CD8-positive, alpha-beta T cell (primary cell): ENCODE measurements at regions of chr1 and their contacts with region 1.

Region 1: DNA sequence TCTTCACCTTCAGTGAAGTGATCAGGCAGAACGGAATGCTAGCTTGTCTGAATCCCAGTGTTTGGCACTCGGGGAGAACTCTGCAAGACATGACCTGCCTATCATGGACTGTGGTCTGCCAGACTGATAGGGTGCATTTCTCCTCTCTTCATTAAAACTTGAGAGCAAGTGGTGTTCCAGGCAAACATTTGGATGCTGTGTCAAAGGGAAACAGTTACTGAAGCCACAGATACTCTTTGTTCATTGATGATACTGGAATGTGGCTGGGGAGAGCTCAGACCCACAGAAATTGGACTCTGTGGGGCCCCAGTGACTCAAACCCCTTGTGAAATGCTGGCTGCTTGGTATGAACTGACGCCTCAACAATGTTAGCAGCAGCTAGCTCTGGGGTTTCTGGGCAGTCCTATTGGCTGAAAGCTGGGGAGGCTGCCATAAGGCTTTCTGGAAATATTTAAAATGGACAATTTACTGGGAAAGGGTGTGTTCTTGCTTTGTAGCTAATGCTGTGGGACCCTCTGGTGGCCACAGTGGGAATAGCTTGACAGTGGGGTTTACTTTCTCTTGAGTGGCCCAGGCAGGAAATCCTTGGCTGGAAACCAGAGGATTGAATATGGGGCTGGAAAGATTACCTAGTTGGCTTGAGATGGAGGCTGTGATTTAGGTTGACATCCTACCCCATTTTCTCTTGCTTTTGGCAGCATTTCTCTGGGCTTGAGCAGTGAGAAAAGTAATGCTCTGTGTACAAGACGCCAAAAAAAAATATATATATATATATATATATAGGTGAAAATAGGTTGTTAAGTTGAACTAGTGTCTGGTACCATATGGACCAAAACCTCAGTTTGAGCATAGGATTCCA is 8.0 kb upstream of the S100A10 start:
- DNase-seq: peak; percentile 59 to 85 (median 79)
- ATAC-seq: peak; percentile 83
- H3K4me3 ChIP-seq: no peak overlapping the region
- H3K4me3 Mint-ChIP-seq: no peak overlapping the region
- H3K27ac ChIP-seq: no peak overlapping the region
- H3K27ac Mint-ChIP-seq: no peak overlapping the region
- H3K4me1 ChIP-seq: no peaks in the 10 kb centered on the region
- H3K4me1 Mint-ChIP-seq: no peaks in the 10 kb centered on the region
- H3K27me3 ChIP-seq: no peaks in the 10 kb centered on the region
- H3K27me3 Mint-ChIP-seq: peaks cover 8% of the 10 kb centered on the region
- CTCF ChIP-seq: peak; percentile 91

Region 2: DNA sequence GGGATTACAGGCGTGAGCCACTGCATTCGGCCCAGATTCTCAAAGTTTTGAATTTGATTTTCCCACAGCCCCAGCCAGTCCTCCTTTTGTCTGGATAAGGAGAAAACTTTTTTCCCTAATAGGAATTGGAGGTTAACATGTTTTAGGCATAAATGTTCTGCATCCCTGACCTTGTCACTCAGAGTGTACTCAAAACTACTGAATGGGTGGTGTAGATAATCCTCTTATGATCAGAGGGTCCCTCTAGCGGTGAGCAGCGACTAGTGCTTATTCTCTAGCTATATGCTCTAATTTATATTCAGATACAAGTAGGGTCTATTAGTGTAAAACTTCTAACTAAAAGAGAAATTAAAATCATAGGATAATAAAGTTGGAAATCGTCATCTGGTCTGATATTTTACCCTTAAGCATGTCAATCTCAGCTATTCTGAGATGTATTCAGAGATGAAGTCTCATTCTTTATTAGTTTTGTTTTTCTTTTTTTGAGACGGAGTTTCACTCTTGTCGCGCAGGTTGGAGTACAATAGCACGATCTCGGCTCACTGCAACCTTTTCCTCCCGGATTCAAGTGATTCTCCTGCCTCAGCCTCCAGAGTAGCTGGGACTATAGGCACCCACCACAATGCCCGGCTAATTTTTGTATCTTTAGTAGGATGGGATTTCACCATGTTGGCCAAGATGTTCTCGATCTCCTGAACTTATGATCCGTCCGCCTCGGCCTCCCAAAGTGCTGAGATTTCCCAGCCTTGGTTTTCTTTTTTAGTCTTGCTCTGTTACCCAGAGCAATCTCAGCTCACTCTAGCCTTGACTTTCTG is 749.8 kb before region 1 on chr1:
- CTCF ChIA-PET with region 1: no interaction called
- POLR2A ChIA-PET with region 1: no interaction called
- intact Hi-C with region 1: no loop called
- DNase-seq: peak; percentile 34 to 85 (median 68)
- ATAC-seq: peak; percentile 67
- H3K4me3 ChIP-seq: no peak overlapping the region
- H3K4me3 Mint-ChIP-seq: no peak overlapping the region
- H3K27ac ChIP-seq: no peak overlapping the region
- H3K27ac Mint-ChIP-seq: no peak overlapping the region
- H3K4me1 ChIP-seq: peaks cover 10% of the 10 kb centered on the region
- H3K4me1 Mint-ChIP-seq: peaks cover 17% of the 10 kb centered on the region
- H3K27me3 ChIP-seq: no peaks in the 10 kb centered on the region
- H3K27me3 Mint-ChIP-seq: no peaks in the 10 kb centered on the region
- CTCF ChIP-seq: peak; percentile 91

Region 3: DNA sequence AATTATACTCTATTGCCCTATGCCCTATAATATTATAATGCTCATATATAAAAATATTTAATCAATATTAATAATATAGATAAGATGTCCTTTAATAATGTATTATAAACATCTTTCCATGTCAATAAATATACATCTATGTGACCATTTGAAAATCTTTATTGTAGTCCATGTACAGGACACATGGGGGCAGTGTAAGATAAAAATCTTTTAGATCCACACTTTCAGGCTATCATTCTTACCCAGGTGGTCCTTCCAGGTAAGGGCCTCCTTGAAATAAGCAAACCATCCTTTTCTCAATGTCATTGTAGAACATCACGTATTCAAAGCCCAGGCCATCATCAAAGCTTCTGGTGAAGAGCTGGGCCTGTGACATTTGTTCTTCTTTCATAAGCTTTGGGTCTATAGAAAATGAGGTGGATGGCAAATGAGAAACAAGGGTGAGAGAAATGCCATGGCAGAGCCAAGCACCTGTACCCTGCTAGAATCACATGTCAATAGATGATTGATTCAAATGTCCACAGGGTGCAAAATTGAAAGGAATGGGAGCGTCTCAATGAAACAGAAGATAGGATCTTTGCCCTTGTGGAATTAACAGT is 112.5 kb before region 1 on chr1:
- CTCF ChIA-PET with region 1: interaction called, 68 read pairs
- POLR2A ChIA-PET with region 1: interaction called, 3 read pairs
- intact Hi-C with region 1: loop called (anchors 1 kb)
- DNase-seq: peak in 2 of 9 experiments; percentile 48 to 58
- ATAC-seq: peak; percentile 69
- H3K4me3 ChIP-seq: no peak overlapping the region
- H3K4me3 Mint-ChIP-seq: no peak overlapping the region
- H3K27ac ChIP-seq: no peak overlapping the region
- H3K27ac Mint-ChIP-seq: peak overlapping the region; percentile 19
- H3K4me1 ChIP-seq: peaks cover 13% of the 10 kb centered on the region
- H3K4me1 Mint-ChIP-seq: peaks cover 24% of the 10 kb centered on the region
- H3K27me3 ChIP-seq: no peaks in the 10 kb centered on the region
- H3K27me3 Mint-ChIP-seq: no peaks in the 10 kb centered on the region
- CTCF ChIP-seq: peak; percentile 53

Region 4: DNA sequence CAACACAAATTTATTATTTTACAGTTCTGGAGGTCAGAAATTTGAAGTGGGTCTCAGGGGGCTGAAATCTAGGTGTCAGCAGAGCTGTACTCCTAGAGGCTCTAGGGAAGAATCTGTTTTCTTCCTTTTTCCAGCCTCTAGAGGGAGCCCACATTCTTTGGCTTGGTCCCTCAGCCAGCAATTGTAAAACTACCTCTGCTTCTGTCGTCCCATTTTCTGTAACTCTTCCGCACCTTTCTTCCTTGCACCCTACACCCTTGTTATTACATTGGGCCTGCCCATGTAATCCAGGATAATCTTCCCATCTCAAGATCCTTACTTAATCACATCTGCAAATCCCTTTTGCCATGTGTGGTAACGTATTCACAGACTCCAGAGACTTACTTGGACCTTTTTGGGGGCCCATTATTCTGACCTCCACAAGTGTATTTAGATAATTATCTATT is 67.5 kb before region 1 on chr1:
- CTCF ChIA-PET with region 1: interaction called, 149 read pairs
- POLR2A ChIA-PET with region 1: interaction called, 3 read pairs
- intact Hi-C with region 1: loop called (anchors 1 kb)
- DNase-seq: peak; percentile 10 to 81 (median 38)
- ATAC-seq: peak; percentile 78
- H3K4me3 ChIP-seq: no peak overlapping the region
- H3K4me3 Mint-ChIP-seq: no peak overlapping the region
- H3K27ac ChIP-seq: no peak overlapping the region
- H3K27ac Mint-ChIP-seq: no peak overlapping the region
- H3K4me1 ChIP-seq: peaks cover 3% of the 10 kb centered on the region
- H3K4me1 Mint-ChIP-seq: peaks cover 2% of the 10 kb centered on the region
- H3K27me3 ChIP-seq: no peaks in the 10 kb centered on the region
- H3K27me3 Mint-ChIP-seq: no peaks in the 10 kb centered on the region
- CTCF ChIP-seq: peak; percentile 83

Region 5: DNA sequence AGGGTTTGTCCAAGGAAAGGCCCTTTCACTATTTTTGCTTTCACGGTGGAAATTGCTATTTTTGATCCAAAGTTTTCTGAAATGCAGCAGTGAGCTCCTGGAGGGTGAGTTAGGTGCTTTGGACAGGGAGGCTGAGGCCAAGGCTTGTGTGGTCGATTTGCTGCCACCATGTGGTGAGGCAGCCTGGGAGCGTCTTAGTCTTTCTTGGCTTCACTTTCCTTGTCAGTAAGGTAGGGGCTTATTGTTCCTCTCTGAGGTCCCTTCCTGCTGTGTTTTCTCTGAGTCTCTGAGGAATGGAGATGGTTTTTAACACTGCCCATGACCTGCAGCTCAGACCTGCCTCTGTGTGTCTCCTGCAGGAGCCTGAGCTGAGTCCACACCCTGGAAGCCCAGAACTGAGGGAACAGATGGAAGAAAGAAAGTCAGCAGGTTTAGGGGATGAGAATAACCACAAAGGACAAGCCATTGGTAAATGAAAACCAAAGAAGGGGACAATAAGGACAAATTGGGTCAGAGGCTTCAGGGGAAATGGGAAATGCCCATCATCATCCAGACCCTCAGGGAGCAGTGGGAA is 12.1 kb after region 1 on chr1:
- CTCF ChIA-PET with region 1: interaction called, 68 read pairs
- POLR2A ChIA-PET with region 1: interaction called, 5 read pairs
- intact Hi-C with region 1: no loop called
- DNase-seq: peak in 5 of 9 experiments; percentile 33 to 55 (median 51)
- ATAC-seq: no peak
- H3K4me3 ChIP-seq: no peak overlapping the region
- H3K4me3 Mint-ChIP-seq: no peak overlapping the region
- H3K27ac ChIP-seq: no peak overlapping the region
- H3K27ac Mint-ChIP-seq: no peak overlapping the region
- H3K4me1 ChIP-seq: no peaks in the 10 kb centered on the region
- H3K4me1 Mint-ChIP-seq: no peaks in the 10 kb centered on the region
- H3K27me3 ChIP-seq: no peaks in the 10 kb centered on the region
- H3K27me3 Mint-ChIP-seq: peaks cover 9% of the 10 kb centered on the region
- CTCF ChIP-seq: no peak